ENCODE measurements at regions of chr20 and their contacts with region 1.

Region 1: GRCh38 chr20:53773792-53774401 is 180.3 kb upstream of the ZNF217 start:
- DNase-seq: peak; percentile 47
- H3K4me3 ChIP-seq: no peak overlapping the region
- H3K27ac ChIP-seq: peak overlapping the region; percentile 32
- H3K4me1 ChIP-seq: peaks cover 19% of the 10 kb centered on the region
- H3K27me3 ChIP-seq: no peaks in the 10 kb centered on the region
- CTCF ChIP-seq: no peak

Region 2: DNA sequence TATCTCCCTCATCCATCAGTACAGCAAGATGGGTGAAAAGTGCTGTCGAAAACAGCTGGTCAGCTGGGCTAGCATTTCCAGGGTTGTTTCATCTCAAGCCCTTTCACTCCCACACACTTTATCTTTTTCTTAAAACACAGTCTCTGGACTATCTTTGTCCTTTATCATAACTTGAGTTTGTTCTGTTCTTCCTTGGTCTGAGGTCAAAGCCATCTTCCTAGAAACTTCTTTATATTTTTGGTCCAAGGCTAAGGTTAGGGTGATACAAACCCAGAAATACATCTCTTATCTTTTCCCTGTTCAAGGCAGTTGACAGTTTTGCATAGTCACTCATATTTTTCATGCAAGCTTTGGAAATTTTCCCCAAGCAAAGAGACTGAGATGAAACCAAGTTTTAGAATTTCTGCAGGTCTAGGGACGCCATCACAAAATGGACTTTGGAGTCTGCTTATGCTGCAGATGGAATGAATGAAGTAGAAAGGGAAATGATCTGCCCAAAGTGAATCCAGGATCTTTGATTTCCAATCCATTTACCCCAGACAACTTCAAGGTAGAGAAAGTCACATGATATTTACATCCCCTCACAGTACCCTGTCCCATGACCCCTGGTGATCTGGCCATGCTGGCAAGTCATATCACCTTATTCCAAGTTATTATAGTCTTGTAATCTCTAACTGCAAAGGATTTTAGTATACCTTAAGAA is 477.3 kb before region 1 on chr20:
- CTCF ChIA-PET with region 1: no interaction called
- POLR2A ChIA-PET with region 1: interaction called, 10 read pairs
- intact Hi-C with region 1: no loop called
- DNase-seq: no peak
- H3K4me3 ChIP-seq: no peak overlapping the region
- H3K27ac ChIP-seq: no peak overlapping the region
- H3K4me1 ChIP-seq: peaks cover 4% of the 10 kb centered on the region
- H3K27me3 ChIP-seq: no peaks in the 10 kb centered on the region
- CTCF ChIP-seq: no peak

Region 3: GRCh38 chr20:53652090-53652858 is 121.6 kb before region 1 on chr20:
- CTCF ChIA-PET with region 1: no interaction called
- POLR2A ChIA-PET with region 1: no interaction called
- intact Hi-C with region 1: no loop called
- DNase-seq: no peak
- H3K4me3 ChIP-seq: no peak overlapping the region
- H3K27ac ChIP-seq: peak overlapping the region; percentile 4
- H3K4me1 ChIP-seq: peaks cover 39% of the 10 kb centered on the region
- H3K27me3 ChIP-seq: no peaks in the 10 kb centered on the region
- CTCF ChIP-seq: no peak

Measured in A673 (cell line).